CD4-positive, alpha-beta memory T cell (primary cell): ENCODE measurements at regions of chr12 and their contacts with region 1.

Region 1: GRCh38 chr12:33247641-33248040 is 192.0 kb downstream of the SYT10 start:
- DNase-seq: no peak
- H3K4me3 ChIP-seq: no peak overlapping the region
- H3K4me3 Mint-ChIP-seq: no peak overlapping the region
- H3K27ac ChIP-seq: no peak overlapping the region
- H3K27ac Mint-ChIP-seq: no peak overlapping the region
- H3K4me1 ChIP-seq: no peaks in the 10 kb centered on the region
- H3K4me1 Mint-ChIP-seq: no peaks in the 10 kb centered on the region
- H3K27me3 ChIP-seq: no peaks in the 10 kb centered on the region
- H3K27me3 Mint-ChIP-seq: no peaks in the 10 kb centered on the region

Region 2: GRCh38 chr12:33223933-33224332 is 23.7 kb before region 1 on chr12:
- CTCF ChIA-PET with region 1: no interaction called
- POLR2A ChIA-PET with region 1: no interaction called
- intact Hi-C with region 1: loop called (anchors 2 kb)
- DNase-seq: no peak
- H3K4me3 ChIP-seq: no peak overlapping the region
- H3K4me3 Mint-ChIP-seq: no peak overlapping the region
- H3K27ac ChIP-seq: no peak overlapping the region
- H3K27ac Mint-ChIP-seq: no peak overlapping the region
- H3K4me1 ChIP-seq: no peaks in the 10 kb centered on the region
- H3K4me1 Mint-ChIP-seq: no peaks in the 10 kb centered on the region
- H3K27me3 ChIP-seq: no peaks in the 10 kb centered on the region
- H3K27me3 Mint-ChIP-seq: no peaks in the 10 kb centered on the region